ENCODE measurements at regions of chr5 and their contacts with region 1.

Region 1: DNA sequence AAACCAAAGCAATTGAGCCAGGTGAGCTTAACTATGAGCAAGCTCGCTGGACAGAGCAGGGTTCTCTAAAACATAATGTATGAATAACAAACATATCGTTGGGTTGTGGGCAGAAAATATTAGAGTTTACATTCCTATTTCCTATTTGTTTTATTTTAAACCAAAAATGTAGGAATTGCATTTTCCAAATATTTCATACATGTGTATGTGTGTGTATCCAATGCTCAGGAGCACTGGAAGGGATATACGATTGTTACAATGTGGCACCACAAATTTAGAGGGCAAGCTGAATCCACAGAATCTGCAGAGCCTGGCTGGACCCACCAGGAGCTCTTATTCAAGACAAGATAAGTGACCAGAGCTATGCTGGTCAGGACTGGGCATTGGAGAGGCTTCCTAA is 325.3 kb upstream of the HAPLN1 start:
- DNase-seq: no peak
- H3K4me3 ChIP-seq: no peak overlapping the region
- H3K27ac ChIP-seq: no peak overlapping the region
- H3K4me1 ChIP-seq: no peaks in the 10 kb centered on the region
- H3K27me3 ChIP-seq: no peaks in the 10 kb centered on the region
- CTCF ChIP-seq: no peak

Region 2: DNA sequence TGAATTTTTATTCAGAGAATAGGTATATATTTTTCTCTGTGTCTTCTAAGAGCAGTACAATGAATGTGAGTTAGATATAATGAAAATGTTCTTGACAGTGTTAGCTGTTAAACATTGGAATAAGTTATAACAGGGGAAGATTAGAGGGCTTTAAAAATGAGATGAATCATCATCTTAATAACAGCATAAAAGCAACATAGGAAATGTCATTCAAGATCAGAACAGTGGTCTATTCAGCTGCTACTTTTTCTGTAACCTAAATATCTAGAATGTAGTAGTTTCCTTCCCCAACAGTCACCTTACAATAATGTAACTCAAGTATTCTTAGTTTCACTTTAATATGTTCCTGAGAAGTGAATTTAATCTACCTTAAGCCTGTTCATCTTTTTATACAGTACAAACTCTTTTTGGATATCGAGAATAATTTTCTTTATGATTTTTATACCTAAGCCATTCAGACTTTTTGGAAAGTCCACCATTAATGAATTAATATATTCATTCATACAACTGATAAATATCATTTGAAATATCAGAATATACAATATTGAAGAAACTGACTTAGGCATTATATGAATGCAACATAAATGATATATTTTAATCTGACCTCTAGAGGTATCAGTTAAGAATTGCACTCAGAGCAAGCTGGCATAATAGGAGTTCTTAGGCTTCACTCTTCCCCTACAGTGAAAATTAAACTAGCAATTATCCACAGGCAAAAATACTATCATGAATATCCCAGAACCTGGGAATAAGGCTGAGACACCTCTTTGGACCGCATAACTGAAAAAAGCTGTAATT is 404.9 kb after region 1 on chr5:
- CTCF ChIA-PET with region 1: no interaction called
- POLR2A ChIA-PET with region 1: interaction called, 10 read pairs
- intact Hi-C with region 1: no loop called
- DNase-seq: no peak
- H3K4me3 ChIP-seq: no peak overlapping the region
- H3K27ac ChIP-seq: no peak overlapping the region
- H3K4me1 ChIP-seq: no peaks in the 10 kb centered on the region
- H3K27me3 ChIP-seq: no peaks in the 10 kb centered on the region
- CTCF ChIP-seq: peak; percentile 61